ENCODE measurements at regions of chr1 and their contacts with region 1.

Region 1: DNA sequence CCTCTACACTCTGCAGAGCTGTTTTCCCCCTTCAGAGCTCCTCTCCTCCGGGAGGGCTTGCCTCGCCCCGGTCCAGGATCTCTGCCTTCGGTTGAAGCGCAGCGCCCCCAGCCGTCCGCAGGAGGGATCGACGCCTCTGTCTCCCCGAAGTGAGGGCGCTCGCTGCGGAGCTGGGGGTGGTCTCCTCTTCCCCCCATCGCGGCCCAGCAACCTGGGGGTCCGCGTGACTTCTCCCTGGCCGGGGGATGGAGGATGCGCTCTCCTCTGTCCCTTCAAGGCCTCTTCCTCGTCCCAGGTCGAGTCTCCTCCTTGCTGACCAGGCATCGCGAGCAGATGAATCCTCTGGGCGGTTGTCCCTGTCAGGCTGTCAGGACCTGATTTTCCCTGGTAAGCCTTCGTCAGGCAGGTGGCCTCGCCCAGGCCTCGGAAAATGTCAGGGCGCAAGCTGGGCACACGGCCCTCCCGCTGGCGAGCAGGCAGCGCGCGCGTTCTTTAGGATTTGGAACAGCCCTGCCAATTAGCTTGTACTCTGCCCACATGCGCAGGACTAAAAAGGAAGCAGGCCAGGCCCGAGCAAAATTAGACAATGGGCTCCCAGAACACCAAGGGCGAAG is 90.5 kb downstream of the EDEM3 start:
- DNase-seq: peak; percentile 61 to 76 (median 74)
- H3K4me3 ChIP-seq: peak overlapping the region; percentile 5 to 73 (median 46)
- H3K27ac ChIP-seq: no peak overlapping the region
- H3K4me1 ChIP-seq: peaks cover 0 to 10% (median 9%) of the 10 kb centered on the region in 4 experiments
- H3K27me3 ChIP-seq: peaks cover 0 to 4% (median 2%) of the 10 kb centered on the region in 5 experiments

Region 2: GRCh38 chr1:184650177-184650866 is 13.8 kb before region 1 on chr1:
- CTCF ChIA-PET with region 1: interaction called, 26 read pairs
- POLR2A ChIA-PET with region 1: no interaction called
- DNase-seq: no peak
- H3K4me3 ChIP-seq: no peak overlapping the region
- H3K27ac ChIP-seq: no peak overlapping the region
- H3K4me1 ChIP-seq: no peaks in the 10 kb centered on the region
- H3K27me3 ChIP-seq: no peaks in the 10 kb centered on the region

Region 3: GRCh38 chr1:184684285-184685074 is 20.3 kb after region 1 on chr1:
- CTCF ChIA-PET with region 1: interaction called, 10 read pairs
- POLR2A ChIA-PET with region 1: no interaction called
- DNase-seq: no peak
- H3K4me3 ChIP-seq: no peak overlapping the region
- H3K27ac ChIP-seq: no peak overlapping the region
- H3K4me1 ChIP-seq: no peaks in the 10 kb centered on the region
- H3K27me3 ChIP-seq: no peaks in the 10 kb centered on the region

Measured in common myeloid progenitor, CD34-positive (primary cell).